ENCODE measurements at regions of chr9 and their contacts with region 1.

Region 1: DNA sequence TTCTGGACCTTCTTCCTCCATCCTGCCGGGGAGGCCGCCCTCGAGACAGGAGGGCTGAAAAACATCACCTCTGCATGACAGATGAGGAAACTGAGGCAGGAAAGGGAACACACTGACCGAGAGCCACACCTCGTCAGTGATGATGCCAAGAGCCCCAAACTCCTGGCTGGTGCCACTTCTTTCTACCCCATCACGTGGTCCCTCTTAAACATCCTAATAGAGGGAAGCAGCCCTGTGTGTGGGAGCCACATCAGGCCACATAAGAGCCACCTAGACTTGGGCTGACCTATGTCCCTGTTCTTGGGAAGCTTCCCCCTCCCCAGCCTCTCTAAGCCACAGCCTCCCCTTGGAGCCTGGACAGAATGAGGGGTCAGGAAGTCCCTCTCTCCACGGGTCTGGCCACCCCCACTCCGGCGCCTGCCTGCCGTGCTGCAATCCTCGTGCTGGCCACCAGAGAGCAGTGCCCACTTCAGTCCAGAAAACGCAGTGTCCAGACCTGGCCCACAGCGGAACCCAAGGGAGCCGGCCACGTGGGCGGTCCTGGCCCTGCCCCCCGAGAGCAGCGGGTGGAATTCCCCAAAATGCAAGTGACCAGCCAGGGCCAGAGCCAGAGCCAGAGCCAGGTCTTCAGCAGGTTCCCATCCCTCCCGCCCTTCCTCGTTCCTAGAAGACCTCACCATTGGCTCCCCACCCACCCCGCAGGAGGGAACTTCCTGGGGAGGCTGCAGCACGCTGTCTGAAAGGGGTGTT is 54.7 kb upstream of the SARDH start:
- DNase-seq: peak; percentile 86
- ATAC-seq: peak; percentile 82

Region 2: GRCh38 chr9:133335878-133336811 is 456.8 kb before region 1 on chr9 and contains the start of gene SURF6:
- intact Hi-C with region 1: no loop called
- DNase-seq: peak; percentile 95
- ATAC-seq: peak; percentile 95
- total RNA-seq, gene SURF6: 11.9 TPM

Region 3: GRCh38 chr9:133994353-133995011 is 201.6 kb after region 1 on chr9:
- intact Hi-C with region 1: loop called (anchors 2 kb)
- DNase-seq: peak; percentile 90
- ATAC-seq: peak; percentile 69

Measured in left ventricle myocardium superior (tissue), 1 donor.